ENCODE measurements at regions of chr1 and their contacts with region 1.

Region 1: GRCh38 chr1:209860293-209860881 is 32.6 kb downstream of the UTP25 start:
- DNase-seq: peak; percentile 90

Region 2: GRCh38 chr1:209881619-209882018 is 21.2 kb after region 1 on chr1:
- intact Hi-C with region 1: loop called in 1 of 2 experiments (anchors 1 kb)
- DNase-seq: no peak

Region 3: DNA sequence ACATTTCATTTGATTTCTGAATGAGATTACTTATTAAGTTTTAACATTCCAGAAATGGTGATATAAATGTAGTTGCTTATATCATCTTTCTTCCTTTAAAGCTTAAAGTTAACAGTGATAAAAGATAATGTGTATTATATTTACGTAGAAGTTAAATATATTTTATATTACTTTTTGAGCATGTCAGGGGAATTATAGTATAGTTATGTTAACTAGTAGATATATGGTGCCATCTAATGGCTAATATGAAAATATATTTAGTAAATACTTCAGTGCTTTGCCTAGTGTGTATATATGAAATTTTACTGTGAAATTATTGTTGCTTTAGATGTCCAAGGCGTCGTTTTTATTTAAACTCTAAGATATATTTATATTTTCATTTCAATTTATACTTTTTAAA is 129.1 kb after region 1 on chr1:
- intact Hi-C with region 1: loop called (anchors 5 kb)
- DNase-seq: no peak

Region 4: DNA sequence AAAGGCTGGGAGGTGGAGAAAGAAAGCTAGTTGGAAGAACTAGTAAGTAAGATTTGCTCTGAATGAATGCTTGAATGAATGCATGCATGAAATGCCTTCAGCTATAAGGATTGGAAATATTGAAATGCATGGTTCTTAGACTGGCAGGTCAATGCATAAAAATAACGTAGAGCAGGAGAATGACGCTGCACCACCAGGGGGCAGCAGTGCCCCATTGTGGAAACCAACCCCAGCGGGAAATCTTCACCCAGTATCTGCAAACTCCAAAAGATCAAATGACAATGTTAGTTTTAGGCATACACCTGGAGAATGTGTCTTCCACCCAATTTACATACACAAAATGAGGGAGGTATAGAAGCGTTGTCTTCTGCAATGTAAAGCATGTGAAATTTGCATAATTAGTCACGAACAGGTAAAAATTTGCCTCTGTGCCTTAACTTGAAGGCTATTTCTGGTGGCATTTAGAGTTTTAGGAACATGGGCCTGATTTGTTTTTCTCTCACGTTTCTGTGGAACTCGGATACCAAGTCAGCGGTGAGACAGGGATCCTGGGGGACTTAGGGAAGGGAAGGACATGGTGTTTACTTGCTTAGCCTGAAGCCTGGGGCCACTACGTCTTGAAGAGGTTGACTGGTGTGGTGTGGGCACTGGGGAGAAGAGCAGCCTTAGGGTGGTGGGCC is 547.0 kb after region 1 on chr1:
- intact Hi-C with region 1: no loop called
- DNase-seq: peak; percentile 88